ENCODE measurements at regions of chr14 and their contacts with region 1.

Region 1: DNA sequence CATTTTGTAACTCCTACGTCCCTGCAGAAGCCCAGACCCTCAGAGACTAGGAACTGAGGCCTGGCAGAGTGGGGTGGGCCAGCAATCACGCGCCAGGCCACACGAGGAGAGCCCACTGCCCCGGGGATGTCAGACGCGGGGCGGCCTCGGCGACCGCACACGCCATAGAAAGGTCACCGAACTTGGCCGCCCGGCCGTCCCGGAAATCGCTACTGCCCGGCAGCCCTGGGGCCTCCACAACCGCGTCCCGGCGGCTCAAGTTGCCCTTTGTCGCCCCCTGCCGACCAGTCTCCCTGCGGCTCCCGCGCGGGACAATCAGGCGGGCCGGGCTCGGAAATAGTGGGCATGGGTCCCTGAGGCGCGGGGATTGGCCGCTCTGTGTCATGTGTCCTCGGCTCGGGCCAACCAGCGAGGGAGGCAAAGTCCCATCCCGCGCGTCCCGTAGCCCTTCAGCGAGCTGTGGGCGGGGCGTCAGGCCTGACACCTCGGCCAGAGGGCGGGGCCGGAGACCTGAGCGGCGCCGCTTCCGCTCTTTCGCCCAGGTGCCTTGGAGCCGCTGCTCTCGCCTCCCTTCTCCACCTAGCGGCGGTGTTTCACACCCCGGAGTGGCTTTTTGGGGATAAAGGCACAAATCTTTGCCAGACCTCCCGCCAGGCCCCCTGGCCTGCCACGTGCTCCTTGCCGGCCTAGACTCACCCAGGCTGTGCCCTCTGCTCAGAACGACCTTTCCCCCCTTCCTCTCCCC is 33.4 kb upstream of the DEGS2 start:
- DNase-seq: peak; percentile 98 to 100 (median 99)
- ATAC-seq: peak; percentile 99
- H3K4me3 ChIP-seq: peak overlapping the region; percentile 56
- H3K4me3 Mint-ChIP-seq: peak overlapping the region; percentile 25 to 80 (median 60)
- H3K27ac ChIP-seq: peak overlapping the region; percentile 74
- H3K27ac Mint-ChIP-seq: peak overlapping the region; percentile 84 to 95 (median 93)
- H3K4me1 ChIP-seq: peaks cover 6 to 13% of the 10 kb centered on the region in 2 donors
- H3K4me1 Mint-ChIP-seq: peaks cover 5 to 18% (median 15%) of the 10 kb centered on the region in 7 donors
- H3K27me3 ChIP-seq: no peaks in the 10 kb centered on the region
- H3K27me3 Mint-ChIP-seq: no peaks in the 10 kb centered on the region

Region 2: GRCh38 chr14:99982537-99983250 is 210.2 kb before region 1 on chr14:
- CTCF ChIA-PET with region 1: interaction called, 66 read pairs
- POLR2A ChIA-PET with region 1: no interaction called
- intact Hi-C with region 1: loop called (anchors 1 kb)
- DNase-seq: peak; percentile 35 to 77 (median 72)
- ATAC-seq: peak; percentile 100
- H3K4me3 ChIP-seq: no peak overlapping the region
- H3K4me3 Mint-ChIP-seq: no peak overlapping the region
- H3K27ac ChIP-seq: no peak overlapping the region
- H3K27ac Mint-ChIP-seq: peak overlapping the region in 6 of 9 donors; percentile 3 to 85 (median 68)
- H3K4me1 ChIP-seq: peaks cover 0 to 15% of the 10 kb centered on the region in 2 donors
- H3K4me1 Mint-ChIP-seq: peaks cover 5 to 21% (median 19%) of the 10 kb centered on the region in 7 donors
- H3K27me3 ChIP-seq: no peaks in the 10 kb centered on the region
- H3K27me3 Mint-ChIP-seq: no peaks in the 10 kb centered on the region

Region 3: DNA sequence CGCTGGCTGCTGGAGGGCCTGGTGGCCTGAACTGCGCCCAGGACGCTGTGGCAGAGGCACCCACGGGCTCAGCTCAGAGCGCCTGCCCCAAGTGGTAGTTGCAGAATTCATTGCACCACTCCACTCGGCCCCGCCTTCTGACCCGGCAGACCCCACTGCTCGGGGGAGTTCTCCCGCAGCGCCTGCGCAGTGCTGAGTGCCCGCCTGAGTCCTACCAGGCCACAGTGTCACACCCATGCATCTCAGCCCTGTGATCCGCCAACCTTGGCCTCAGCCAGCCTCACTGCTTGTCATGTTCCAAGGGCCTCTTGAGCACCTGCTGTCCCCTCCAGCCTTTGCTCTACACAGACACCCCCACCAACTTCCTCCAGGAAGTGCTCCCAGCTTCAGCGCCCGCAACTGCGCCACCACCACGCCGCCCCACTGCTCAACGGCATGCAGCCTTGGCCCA is 45.6 kb before region 1 on chr14:
- CTCF ChIA-PET with region 1: interaction called, 3 read pairs
- POLR2A ChIA-PET with region 1: interaction called, 3 read pairs
- intact Hi-C with region 1: loop called in 1 of 2 experiments (anchors 1 kb)
- DNase-seq: peak in 8 of 9 donors; percentile 50 to 77 (median 69)
- ATAC-seq: peak; percentile 73
- H3K4me3 ChIP-seq: peak overlapping the region; percentile 39
- H3K4me3 Mint-ChIP-seq: peak overlapping the region; percentile 33 to 87 (median 83)
- H3K27ac ChIP-seq: peak overlapping the region; percentile 60
- H3K27ac Mint-ChIP-seq: peak overlapping the region; percentile 70 to 96 (median 87)
- H3K4me1 ChIP-seq: peaks cover 0 to 13% of the 10 kb centered on the region in 2 donors
- H3K4me1 Mint-ChIP-seq: peaks cover 16 to 28% (median 20%) of the 10 kb centered on the region in 7 donors
- H3K27me3 ChIP-seq: no peaks in the 10 kb centered on the region
- H3K27me3 Mint-ChIP-seq: peaks cover 0 to 3% (median 0%) of the 10 kb centered on the region in 5 donors

Region 4: DNA sequence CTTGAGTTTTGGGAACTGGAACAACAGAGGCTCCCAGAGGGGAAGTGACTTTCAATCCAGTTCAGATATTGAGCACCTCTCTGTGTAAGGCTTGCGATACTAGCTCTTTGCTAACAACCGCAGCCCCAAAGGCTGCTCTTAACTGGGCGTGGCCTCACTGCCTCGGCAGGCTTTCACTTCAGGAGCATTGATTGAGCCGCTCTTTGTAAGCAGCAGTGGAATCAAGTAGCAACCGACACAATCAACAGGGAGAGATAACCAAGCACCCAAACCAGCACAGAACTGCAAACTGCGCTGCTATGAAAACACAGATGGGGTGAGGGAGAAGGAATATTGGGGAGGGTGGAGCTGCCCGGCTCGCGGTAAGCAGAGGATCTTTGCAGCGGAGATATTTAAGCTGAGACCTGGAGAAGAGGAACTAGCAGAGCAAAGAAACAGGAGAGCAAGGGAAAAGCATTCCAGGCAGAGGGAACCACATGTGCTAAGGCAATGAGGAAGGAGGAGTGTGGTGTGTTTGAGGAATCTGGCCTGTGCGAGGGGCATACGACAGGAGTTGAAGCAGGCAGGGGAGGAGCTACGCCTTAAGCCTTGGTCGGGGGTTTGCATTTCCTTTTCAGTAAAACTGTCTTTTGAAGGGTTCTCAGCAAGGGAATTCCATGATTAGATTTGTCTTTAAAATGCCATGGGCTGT is 28.8 kb after region 1 on chr14:
- CTCF ChIA-PET with region 1: interaction called, 39 read pairs
- POLR2A ChIA-PET with region 1: interaction called, 25 read pairs
- intact Hi-C with region 1: loop called (anchors 1 kb)
- DNase-seq: peak; percentile 22 to 81 (median 74)
- ATAC-seq: peak; percentile 95
- H3K4me3 ChIP-seq: peak overlapping the region; percentile 88
- H3K4me3 Mint-ChIP-seq: no peak overlapping the region
- H3K27ac ChIP-seq: peak overlapping the region; percentile 77
- H3K27ac Mint-ChIP-seq: no peak overlapping the region
- H3K4me1 ChIP-seq: peaks cover 31 to 36% of the 10 kb centered on the region in 2 donors
- H3K4me1 Mint-ChIP-seq: peaks cover 11 to 20% (median 13%) of the 10 kb centered on the region in 7 donors
- H3K27me3 ChIP-seq: no peaks in the 10 kb centered on the region
- H3K27me3 Mint-ChIP-seq: no peaks in the 10 kb centered on the region

Region 5: DNA sequence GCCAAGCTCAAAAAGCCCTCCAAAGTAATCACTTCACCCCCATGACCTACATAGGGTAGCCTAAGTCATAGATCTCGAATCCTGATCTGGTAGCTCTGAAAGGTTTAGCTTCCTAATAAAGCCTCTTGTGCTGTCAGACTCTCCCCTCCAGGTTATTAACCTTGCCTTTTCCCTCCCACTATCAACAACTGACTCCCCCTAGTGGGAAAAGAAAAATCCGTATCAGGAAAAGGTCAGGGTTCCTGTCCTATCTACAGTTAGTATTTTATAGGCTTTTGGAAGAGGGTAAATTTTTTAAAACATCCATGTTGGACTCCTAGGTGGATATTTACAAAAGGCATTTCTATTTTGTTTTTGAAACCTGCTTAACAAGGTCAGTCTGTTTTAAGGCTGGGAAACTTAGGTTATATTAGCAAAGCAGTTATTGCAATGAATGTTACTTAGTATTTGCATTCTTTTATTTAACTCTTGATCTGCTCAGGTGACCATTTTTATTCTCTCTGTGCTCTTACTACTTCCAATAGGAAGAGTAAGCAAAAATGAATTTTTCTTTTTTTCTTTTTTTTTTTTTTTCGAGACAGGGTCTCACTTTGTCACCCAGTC is 54.1 kb after region 1 on chr14:
- CTCF ChIA-PET with region 1: interaction called, 12 read pairs
- POLR2A ChIA-PET with region 1: interaction called, 5 read pairs
- intact Hi-C with region 1: loop called in 1 of 2 experiments (anchors 1 kb)
- DNase-seq: peak in 7 of 9 donors; percentile 15 to 48 (median 35)
- ATAC-seq: peak; percentile 68
- H3K4me3 ChIP-seq: no peak overlapping the region
- H3K4me3 Mint-ChIP-seq: peak overlapping the region in 9 of 10 donors; percentile 39 to 96 (median 61)
- H3K27ac ChIP-seq: peak overlapping the region; percentile 54
- H3K27ac Mint-ChIP-seq: peak overlapping the region; percentile 7 to 84 (median 67)
- H3K4me1 ChIP-seq: peaks cover 46 to 62% of the 10 kb centered on the region in 2 donors
- H3K4me1 Mint-ChIP-seq: peaks cover 49 to 90% (median 65%) of the 10 kb centered on the region in 7 donors
- H3K27me3 ChIP-seq: no peaks in the 10 kb centered on the region
- H3K27me3 Mint-ChIP-seq: no peaks in the 10 kb centered on the region

Region 6: GRCh38 chr14:100610511-100611217 is 417.8 kb after region 1 on chr14:
- CTCF ChIA-PET with region 1: no interaction called
- POLR2A ChIA-PET with region 1: no interaction called
- intact Hi-C with region 1: no loop called
- DNase-seq: no peak
- ATAC-seq: no peak
- H3K4me3 ChIP-seq: no peak overlapping the region
- H3K4me3 Mint-ChIP-seq: no peak overlapping the region
- H3K27ac ChIP-seq: no peak overlapping the region
- H3K27ac Mint-ChIP-seq: no peak overlapping the region
- H3K4me1 ChIP-seq: no peaks in the 10 kb centered on the region
- H3K4me1 Mint-ChIP-seq: peaks cover 0 to 2% (median 0%) of the 10 kb centered on the region in 7 donors
- H3K27me3 ChIP-seq: no peaks in the 10 kb centered on the region
- H3K27me3 Mint-ChIP-seq: peaks cover 0 to 6% (median 0%) of the 10 kb centered on the region in 5 donors